B cell (primary cell): ENCODE measurements at regions of chr17 and their contacts with region 1.

Region 1: DNA sequence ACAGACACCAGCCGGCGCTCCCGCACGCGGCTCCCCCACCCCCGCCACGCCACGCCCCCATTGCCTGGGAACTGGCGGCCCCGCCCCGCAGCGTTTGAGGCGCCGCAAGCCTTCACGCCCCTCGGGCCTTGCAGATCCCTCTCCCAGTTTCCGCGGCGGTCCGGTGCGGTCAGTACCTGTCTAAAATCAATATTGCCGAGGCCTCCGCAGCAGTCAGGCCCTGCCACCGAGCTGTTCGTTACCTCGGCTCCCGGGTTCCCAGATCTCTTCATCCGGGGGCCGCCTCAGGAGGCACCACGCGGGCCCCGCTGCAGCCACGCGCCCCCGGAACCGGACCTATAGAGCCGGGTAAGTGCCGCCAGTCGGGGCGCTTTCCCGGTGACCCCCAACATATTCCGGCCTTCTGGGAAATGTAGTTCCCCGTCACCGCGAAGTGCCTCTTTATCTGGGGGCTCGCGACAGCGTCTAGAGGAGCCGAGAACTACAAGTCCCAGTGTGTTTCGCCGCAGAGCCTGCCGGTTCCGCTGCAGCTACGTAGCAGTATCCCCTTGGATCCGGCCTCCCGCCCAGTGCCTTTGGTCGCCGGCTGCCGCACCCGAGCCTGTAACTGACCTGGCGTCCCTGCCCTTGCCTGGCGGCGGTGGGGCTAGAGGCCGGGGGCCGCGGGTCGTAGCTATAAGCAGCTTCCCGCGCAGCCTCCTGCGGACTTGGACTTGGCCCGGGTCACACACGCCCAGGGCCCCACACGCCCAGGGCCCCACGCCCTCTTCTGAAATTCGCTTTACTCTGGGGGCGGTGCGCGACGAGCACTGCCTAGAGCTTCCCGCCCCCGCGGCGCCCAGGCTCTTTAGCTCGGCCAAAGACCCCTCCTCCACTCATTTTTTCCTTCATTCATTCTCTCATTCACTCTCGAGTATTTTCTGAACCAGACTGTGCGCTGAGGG is at the start of gene PEMT:
- DNase-seq: peak; percentile 98
- ATAC-seq: peak; percentile 92
- H3K4me3 ChIP-seq: peak within 1 kb of the TSS; percentile 65 to 85 (median 71)
- H3K4me3 Mint-ChIP-seq: peak within 1 kb of the TSS; percentile 93
- H3K27ac ChIP-seq: peak within 1 kb of the TSS; percentile 67 to 80
- H3K27ac Mint-ChIP-seq: peak within 1 kb of the TSS; percentile 86
- H3K4me1 ChIP-seq: peaks cover 12 to 22% of the 10 kb centered on the region in 2 donors
- H3K4me1 Mint-ChIP-seq: peaks cover 16% of the 10 kb centered on the region
- H3K27me3 ChIP-seq: no peaks in the 10 kb centered on the region
- H3K27me3 Mint-ChIP-seq: no peaks in the 10 kb centered on the region
- CTCF ChIP-seq: no peak
- total RNA-seq, gene PEMT: 9.0 and 10.7 TPM in 2 replicates

Region 2: DNA sequence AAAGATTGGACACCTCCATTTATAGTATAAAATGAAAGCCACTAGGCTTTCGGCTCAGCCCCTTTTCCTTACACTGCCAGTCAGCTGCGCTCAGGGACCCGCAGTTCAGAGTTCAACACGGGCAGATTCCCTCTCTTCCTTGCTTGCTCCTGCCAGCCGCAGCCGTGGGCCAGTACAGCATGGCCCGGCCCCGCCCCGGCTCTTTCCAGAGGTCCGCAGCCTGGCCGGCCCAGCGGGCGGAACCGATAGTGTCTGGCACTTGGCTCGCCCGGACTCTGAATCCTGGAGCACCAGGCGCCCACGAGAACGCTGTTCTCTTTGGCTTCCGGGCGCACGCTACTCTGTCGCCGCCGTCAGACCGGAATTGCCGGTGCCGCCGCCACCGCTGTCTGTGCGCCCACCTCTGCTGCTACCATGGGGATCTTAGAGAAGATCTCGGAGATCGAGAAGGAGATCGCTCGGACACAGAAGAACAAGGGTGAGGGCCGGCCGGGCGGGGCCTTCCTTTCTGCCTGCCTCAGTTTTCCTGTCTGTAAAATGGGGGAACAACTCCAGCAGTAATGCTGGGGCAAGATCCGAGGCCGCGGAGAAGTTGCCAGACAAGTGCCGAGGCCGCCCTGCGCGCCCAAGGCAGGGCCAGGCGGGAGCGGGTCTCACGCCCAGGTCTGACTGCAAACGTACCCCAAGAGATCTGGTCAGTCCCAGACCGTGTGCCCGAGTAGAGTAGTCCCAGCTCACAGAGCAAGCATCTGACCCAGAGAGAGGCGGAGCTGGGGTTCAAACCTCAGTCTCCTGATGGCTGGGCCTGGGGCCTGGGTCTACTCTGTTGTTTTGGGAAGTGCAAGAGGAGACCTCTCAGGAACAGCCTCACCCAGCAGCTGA is 496.2 kb after region 1 on chr17 and contains the start of gene DRG2:
- CTCF ChIA-PET with region 1: no interaction called
- POLR2A ChIA-PET with region 1: no interaction called
- intact Hi-C with region 1: loop called (anchors 2 kb)
- DNase-seq: peak; percentile 94
- ATAC-seq: peak; percentile 92
- H3K4me3 ChIP-seq: peak within 1 kb of the TSS; percentile 71 to 99 (median 91)
- H3K4me3 Mint-ChIP-seq: peak within 1 kb of the TSS; percentile 99
- H3K27ac ChIP-seq: peak within 1 kb of the TSS; percentile 67 to 90
- H3K27ac Mint-ChIP-seq: peak within 1 kb of the TSS; percentile 98
- H3K4me1 ChIP-seq: peaks cover 8 to 22% of the 10 kb centered on the region in 2 donors
- H3K4me1 Mint-ChIP-seq: peaks cover 25% of the 10 kb centered on the region
- H3K27me3 ChIP-seq: no peaks in the 10 kb centered on the region
- H3K27me3 Mint-ChIP-seq: no peaks in the 10 kb centered on the region
- CTCF ChIP-seq: no peak
- total RNA-seq, gene DRG2: 67.8 and 73.1 TPM in 2 replicates